Transverse colon (tissue), 4 donors: ENCODE measurements at regions of chr16 and their contacts with region 1.

Region 1: GRCh38 chr16:21194771-21195301 is 16.5 kb downstream of the ZP2 start:
- DNase-seq: no peak
- H3K4me3 ChIP-seq: no peak overlapping the region
- H3K27ac ChIP-seq: no peak overlapping the region
- H3K4me1 ChIP-seq: peaks cover 0 to 9% (median 3%) of the 10 kb centered on the region in 4 donors
- H3K27me3 ChIP-seq: no peaks in the 10 kb centered on the region
- CTCF ChIP-seq: no peak
- EP300 ChIP-seq: no peak
- POLR2A ChIP-seq: no peak

Region 2: GRCh38 chr16:21277927-21278706 is 83.3 kb after region 1 on chr16 and contains the start of gene CRYM:
- in situ Hi-C with region 1: loop called in 1 of 4 experiments (anchors 25 kb)
- intact Hi-C with region 1: no loop called
- DNase-seq: peak; percentile 80
- H3K4me3 ChIP-seq: peak within 1 kb of the TSS; percentile 35 to 62 (median 42)
- H3K27ac ChIP-seq: peak within 1 kb of the TSS in 3 of 4 donors; percentile 48 to 60 (median 59)
- H3K4me1 ChIP-seq: peaks cover 0 to 15% (median 5%) of the 10 kb centered on the region in 4 donors
- H3K27me3 ChIP-seq: peaks cover 28% of the 10 kb centered on the region
- CTCF ChIP-seq: peak; percentile 87 to 91 (median 88)
- EP300 ChIP-seq: no peak
- POLR2A ChIP-seq: no peak
- total RNA-seq, gene CRYM: 5.6 to 23.1 (median 18.3) TPM in 3 of 4 donors, not detected in the other

Region 3: DNA sequence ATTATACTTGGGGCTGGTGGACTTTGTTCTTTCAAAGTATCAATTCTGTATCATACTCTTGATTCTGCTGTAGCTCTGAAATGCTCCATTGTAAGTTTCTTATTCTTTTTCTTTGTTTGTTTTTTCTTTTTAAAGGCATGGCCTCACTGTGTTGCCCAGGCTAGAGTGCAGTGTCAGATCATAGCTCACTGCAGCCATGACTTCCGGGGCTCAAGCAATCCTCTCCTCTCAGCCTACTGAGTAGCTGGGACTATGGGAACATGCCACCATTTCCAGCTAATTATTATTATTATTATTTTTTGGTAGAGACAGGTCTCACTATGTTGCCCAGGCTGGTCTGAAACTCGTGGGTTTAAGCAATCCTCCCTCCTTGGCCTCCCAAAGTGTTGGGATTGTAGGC is 365.6 kb after region 1 on chr16:
- in situ Hi-C with region 1: no loop called
- intact Hi-C with region 1: loop called (anchors 5 kb)
- DNase-seq: peak; percentile 5
- H3K4me3 ChIP-seq: no peak overlapping the region
- H3K27ac ChIP-seq: no peak overlapping the region
- H3K4me1 ChIP-seq: no peaks in the 10 kb centered on the region
- H3K27me3 ChIP-seq: peaks cover 2% of the 10 kb centered on the region
- CTCF ChIP-seq: no peak
- EP300 ChIP-seq: no peak
- POLR2A ChIP-seq: no peak

Region 4: GRCh38 chr16:22321339-22322001 is 1126.6 kb after region 1 on chr16:
- in situ Hi-C with region 1: loop called in 1 of 4 experiments (anchors 25 kb)
- intact Hi-C with region 1: no loop called
- DNase-seq: peak; percentile 76
- H3K4me3 ChIP-seq: no peak overlapping the region
- H3K27ac ChIP-seq: no peak overlapping the region
- H3K4me1 ChIP-seq: peaks cover 0 to 3% (median 0%) of the 10 kb centered on the region in 4 donors
- H3K27me3 ChIP-seq: no peaks in the 10 kb centered on the region
- CTCF ChIP-seq: peak; percentile 90 to 95 (median 92)
- EP300 ChIP-seq: no peak
- POLR2A ChIP-seq: no peak

Region 5: DNA sequence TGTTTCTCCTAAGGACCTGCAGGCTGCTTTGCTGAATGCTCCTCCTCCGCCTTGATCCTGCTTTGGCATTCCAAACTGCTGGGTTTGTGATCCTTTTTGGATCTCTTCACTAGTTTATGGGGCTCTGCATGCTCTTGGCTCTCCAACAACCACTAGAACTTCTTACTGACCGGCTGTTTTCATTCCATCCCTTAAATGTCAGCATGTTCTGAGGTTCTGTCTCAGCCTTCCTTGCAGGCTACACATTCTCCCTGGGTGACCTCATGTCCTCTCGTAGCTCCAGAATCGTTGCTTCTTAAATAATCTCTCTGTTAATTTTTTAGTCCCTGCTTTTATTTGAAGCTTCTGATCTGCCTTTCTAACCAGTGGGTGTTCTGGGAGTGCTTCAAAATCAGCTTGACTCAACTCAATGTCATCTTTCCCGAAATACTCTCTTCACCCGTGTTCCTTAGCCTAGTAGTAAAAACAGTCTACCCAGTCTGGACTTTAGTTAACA is 1500.1 kb after region 1 on chr16:
- in situ Hi-C with region 1: no loop called
- intact Hi-C with region 1: loop called (anchors 10 kb)
- DNase-seq: peak; percentile 22
- H3K4me3 ChIP-seq: no peak overlapping the region
- H3K27ac ChIP-seq: peak overlapping the region; percentile 62 to 81 (median 74)
- H3K4me1 ChIP-seq: peaks cover 6 to 21% (median 13%) of the 10 kb centered on the region in 4 donors
- H3K27me3 ChIP-seq: peaks cover 6% of the 10 kb centered on the region
- CTCF ChIP-seq: no peak
- EP300 ChIP-seq: peak; percentile 42
- POLR2A ChIP-seq: no peak